Ovary (tissue), 10 donors: ENCODE measurements at regions of chr12 and their contacts with region 1.

Region 1: DNA sequence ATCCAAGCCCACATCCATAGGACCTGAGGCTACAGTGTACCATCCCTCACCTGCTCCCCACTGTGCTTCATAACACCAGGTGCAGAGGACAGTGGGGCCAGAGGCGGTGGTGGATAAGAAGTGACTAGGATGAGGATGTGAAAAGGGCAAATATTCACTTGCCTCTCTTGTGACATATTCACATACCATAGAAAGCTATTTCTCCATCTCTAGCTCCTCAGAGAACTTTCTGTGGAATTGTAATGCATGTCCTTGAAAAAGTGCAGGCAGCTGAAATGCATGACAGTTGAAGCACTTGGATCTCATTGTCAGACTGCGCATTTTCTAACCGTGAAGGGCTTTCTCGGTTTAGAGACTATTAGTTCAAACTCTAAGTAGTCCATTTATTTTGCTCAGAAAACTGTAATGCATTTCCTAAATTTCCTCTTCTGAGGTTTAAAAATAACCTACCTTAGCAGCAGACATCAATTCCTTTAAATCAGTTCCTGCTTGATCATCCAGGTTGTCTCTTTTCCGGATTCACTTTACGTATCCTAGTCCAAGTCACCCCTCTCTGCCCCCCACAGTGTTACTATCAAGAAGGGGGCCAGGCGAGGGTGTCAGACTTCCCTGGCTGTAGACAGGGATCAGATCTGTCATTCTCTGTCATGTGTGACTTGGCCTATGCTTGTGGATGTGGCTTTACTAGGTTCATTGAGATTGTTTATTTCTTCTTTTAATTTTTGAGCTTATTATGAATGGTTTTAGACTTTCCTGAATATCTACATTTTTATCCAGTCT is 984.0 kb upstream of the TMEM132C start:
- DNase-seq: no peak
- H3K4me3 ChIP-seq: no peak overlapping the region
- H3K27ac ChIP-seq: no peak overlapping the region
- H3K4me1 ChIP-seq: no peaks in the 10 kb centered on the region
- H3K27me3 ChIP-seq: no peaks in the 10 kb centered on the region
- CTCF ChIP-seq: no peak
- EP300 ChIP-seq: no peak
- POLR2A ChIP-seq: no peak

Region 2: DNA sequence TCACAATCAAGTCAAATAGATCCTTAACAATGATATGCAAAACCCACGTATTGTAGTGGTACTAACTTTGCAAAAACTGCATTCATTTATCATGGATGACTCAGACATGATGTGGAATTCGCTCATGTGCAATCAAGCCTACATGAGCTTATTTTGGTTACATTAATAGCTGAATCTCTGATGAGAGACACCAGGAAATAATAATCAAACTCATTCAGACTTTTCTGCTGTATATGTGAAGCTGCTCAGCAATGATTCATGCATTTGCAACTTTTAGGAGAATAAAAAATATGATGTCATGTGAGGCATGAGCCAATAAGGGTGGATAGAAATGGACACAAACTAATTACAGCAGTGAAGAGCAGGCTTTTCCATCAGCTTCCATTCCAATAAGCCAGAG is 91.8 kb before region 1 on chr12:
- intact Hi-C with region 1: no loop called
- DNase-seq: no peak
- H3K4me3 ChIP-seq: no peak overlapping the region
- H3K27ac ChIP-seq: no peak overlapping the region
- H3K4me1 ChIP-seq: no peaks in the 10 kb centered on the region
- H3K27me3 ChIP-seq: no peaks in the 10 kb centered on the region
- CTCF ChIP-seq: no peak
- EP300 ChIP-seq: no peak
- POLR2A ChIP-seq: no peak

Region 3: GRCh38 chr12:127241072-127241817 is 41.7 kb before region 1 on chr12:
- intact Hi-C with region 1: loop called in 1 of 4 experiments (anchors 2 kb)
- DNase-seq: no peak
- H3K4me3 ChIP-seq: no peak overlapping the region
- H3K27ac ChIP-seq: no peak overlapping the region
- H3K4me1 ChIP-seq: no peaks in the 10 kb centered on the region
- H3K27me3 ChIP-seq: no peaks in the 10 kb centered on the region
- CTCF ChIP-seq: no peak
- EP300 ChIP-seq: no peak
- POLR2A ChIP-seq: no peak